HepG2 (cell line): ENCODE measurements at regions of chr11 and their contacts with region 1.

Region 1: GRCh38 chr11:58845366-58845765 is 862 bp upstream of the GLYATL2 start:
- DNase-seq: no peak
- ATAC-seq: no peak
- H3K4me3 ChIP-seq: no peak overlapping the region
- H3K27ac ChIP-seq: no peak overlapping the region
- H3K4me1 ChIP-seq: no peaks in the 10 kb centered on the region
- H3K27me3 ChIP-seq: no peaks in the 10 kb centered on the region
- CTCF ChIP-seq: no peak
- EP300 ChIP-seq: no peak
- POLR2A ChIP-seq: no peak
- RAD21 ChIP-seq: no peak

Region 2: GRCh38 chr11:58900479-58901420 is 55.4 kb after region 1 on chr11:
- CTCF ChIA-PET with region 1: interaction called, 5 read pairs
- POLR2A ChIA-PET with region 1: no interaction called
- in situ Hi-C with region 1: no loop called
- intact Hi-C with region 1: loop called (anchors 1 kb)
- DNase-seq: peak; percentile 56
- ATAC-seq: peak; percentile 96
- H3K4me3 ChIP-seq: 0 out of 6 replicates have a peak overlapping the region, but pooled peaks of 1 of the 3 experiments have one; percentile 39
- H3K27ac ChIP-seq: no peak overlapping the region
- H3K4me1 ChIP-seq: 0 out of 2 replicates have a peak, but pooled peaks cover 4% of the 10 kb centered on the region
- H3K27me3 ChIP-seq: peaks cover 1 to 3% of the 10 kb centered on the region in 2 experiments; a peak in 2 of 5 replicates
- CTCF ChIP-seq: peak; percentile 89
- EP300 ChIP-seq: no peak
- POLR2A ChIP-seq: no peak
- RAD21 ChIP-seq: peak; percentile 63; the same call in 1 of the 2 replicates